Endothelial cell of umbilical vein (primary cell): ENCODE measurements at regions of chr2 and their contacts with region 1.

Region 1: GRCh38 chr2:67825476-67825875 is 237.3 kb downstream of the C1D start:
- DNase-seq: peak; percentile 92
- H3K4me3 ChIP-seq: peak overlapping the region in 1 of 3 experiments; percentile 43
- H3K27ac ChIP-seq: peak overlapping the region; percentile 80
- H3K4me1 ChIP-seq: peaks cover 22% of the 10 kb centered on the region
- H3K27me3 ChIP-seq: no peaks in the 10 kb centered on the region
- CTCF ChIP-seq: no peak
- POLR2A ChIP-seq: no peak

Region 2: DNA sequence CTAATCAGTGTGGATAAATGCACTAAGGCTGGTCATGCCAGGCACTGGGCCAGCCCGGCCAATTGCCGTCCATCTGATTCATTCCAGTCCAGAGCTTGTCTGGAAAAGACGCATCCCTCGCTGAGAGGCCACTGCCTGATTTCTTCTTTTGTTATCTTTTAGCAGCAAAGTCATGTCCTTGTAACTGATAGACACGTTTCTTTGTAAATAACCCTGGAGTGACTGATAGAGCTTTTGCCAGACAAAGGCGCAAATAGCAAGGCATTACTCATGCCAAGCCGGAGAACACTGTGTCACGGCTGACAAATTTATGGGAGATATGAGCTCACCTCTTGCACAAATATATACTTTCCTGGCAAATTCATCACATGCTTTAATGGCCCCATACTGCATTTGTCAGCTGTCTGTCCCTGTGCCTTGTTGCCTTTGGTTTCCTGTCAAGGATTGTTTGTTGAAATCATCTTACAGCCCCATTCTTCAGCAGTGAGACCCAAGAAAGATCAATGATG is 264.0 kb before region 1 on chr2:
- CTCF ChIA-PET with region 1: no interaction called
- POLR2A ChIA-PET with region 1: no interaction called
- dilution Hi-C with region 1: no loop called
- intact Hi-C with region 1: loop called (anchors 2 kb)
- DNase-seq: peak; percentile 95
- H3K4me3 ChIP-seq: peak overlapping the region in 1 of 3 experiments; percentile 8
- H3K27ac ChIP-seq: peak overlapping the region; percentile 92
- H3K4me1 ChIP-seq: peaks cover 32% of the 10 kb centered on the region
- H3K27me3 ChIP-seq: no peaks in the 10 kb centered on the region
- CTCF ChIP-seq: no peak
- POLR2A ChIP-seq: peak; percentile 42

Region 3: GRCh38 chr2:67733517-67733916 is 92.0 kb before region 1 on chr2:
- CTCF ChIA-PET with region 1: interaction called, 9 read pairs
- POLR2A ChIA-PET with region 1: no interaction called
- dilution Hi-C with region 1: no loop called
- intact Hi-C with region 1: loop called (anchors 1 kb)
- DNase-seq: peak; percentile 55
- H3K4me3 ChIP-seq: no peak overlapping the region
- H3K27ac ChIP-seq: no peak overlapping the region
- H3K4me1 ChIP-seq: no peaks in the 10 kb centered on the region
- H3K27me3 ChIP-seq: no peaks in the 10 kb centered on the region
- CTCF ChIP-seq: peak; percentile 32 to 82
- POLR2A ChIP-seq: no peak

Region 4: GRCh38 chr2:67798541-67799160 is 26.8 kb before region 1 on chr2:
- CTCF ChIA-PET with region 1: interaction called, 3 read pairs
- POLR2A ChIA-PET with region 1: no interaction called
- dilution Hi-C with region 1: no loop called
- intact Hi-C with region 1: loop called (anchors 1 kb)
- DNase-seq: peak; percentile 52
- H3K4me3 ChIP-seq: no peak overlapping the region
- H3K27ac ChIP-seq: no peak overlapping the region
- H3K4me1 ChIP-seq: peaks cover 17% of the 10 kb centered on the region
- H3K27me3 ChIP-seq: no peaks in the 10 kb centered on the region
- CTCF ChIP-seq: no peak
- POLR2A ChIP-seq: no peak

Region 5: GRCh38 chr2:67871686-67872412 is 46.4 kb after region 1 on chr2:
- CTCF ChIA-PET with region 1: no interaction called
- POLR2A ChIA-PET with region 1: no interaction called
- dilution Hi-C with region 1: no loop called
- intact Hi-C with region 1: loop called (anchors 1 kb)
- DNase-seq: peak; percentile 84
- H3K4me3 ChIP-seq: peak overlapping the region in 1 of 3 experiments; percentile 37
- H3K27ac ChIP-seq: peak overlapping the region; percentile 100
- H3K4me1 ChIP-seq: peaks cover 38% of the 10 kb centered on the region
- H3K27me3 ChIP-seq: no peaks in the 10 kb centered on the region
- CTCF ChIP-seq: no peak
- POLR2A ChIP-seq: no peak

Region 6: GRCh38 chr2:67917332-67918054 is 92.0 kb after region 1 on chr2:
- CTCF ChIA-PET with region 1: no interaction called
- POLR2A ChIA-PET with region 1: no interaction called
- dilution Hi-C with region 1: no loop called
- intact Hi-C with region 1: loop called (anchors 1 kb)
- DNase-seq: peak; percentile 90
- H3K4me3 ChIP-seq: no peak overlapping the region
- H3K27ac ChIP-seq: peak overlapping the region; percentile 96
- H3K4me1 ChIP-seq: peaks cover 28% of the 10 kb centered on the region
- H3K27me3 ChIP-seq: no peaks in the 10 kb centered on the region
- CTCF ChIP-seq: no peak
- POLR2A ChIP-seq: no peak

Region 7: GRCh38 chr2:68062680-68063387 is 237.4 kb after region 1 on chr2 and contains the start of gene C1D:
- CTCF ChIA-PET with region 1: no interaction called
- POLR2A ChIA-PET with region 1: no interaction called
- dilution Hi-C with region 1: no loop called
- intact Hi-C with region 1: no loop called
- DNase-seq: peak; percentile 95
- H3K4me3 ChIP-seq: peak within 1 kb of the TSS; percentile 79 to 99 (median 83)
- H3K27ac ChIP-seq: peak within 1 kb of the TSS; percentile 93
- H3K4me1 ChIP-seq: peaks cover 14% of the 10 kb centered on the region
- H3K27me3 ChIP-seq: no peaks in the 10 kb centered on the region
- CTCF ChIP-seq: no peak
- POLR2A ChIP-seq: peak; percentile 98
- total RNA-seq, gene C1D: 11.1 and 11.4 TPM in 2 replicates